GM12878 (cell line): ENCODE measurements at regions of chr16 and their contacts with region 1.

Region 1: DNA sequence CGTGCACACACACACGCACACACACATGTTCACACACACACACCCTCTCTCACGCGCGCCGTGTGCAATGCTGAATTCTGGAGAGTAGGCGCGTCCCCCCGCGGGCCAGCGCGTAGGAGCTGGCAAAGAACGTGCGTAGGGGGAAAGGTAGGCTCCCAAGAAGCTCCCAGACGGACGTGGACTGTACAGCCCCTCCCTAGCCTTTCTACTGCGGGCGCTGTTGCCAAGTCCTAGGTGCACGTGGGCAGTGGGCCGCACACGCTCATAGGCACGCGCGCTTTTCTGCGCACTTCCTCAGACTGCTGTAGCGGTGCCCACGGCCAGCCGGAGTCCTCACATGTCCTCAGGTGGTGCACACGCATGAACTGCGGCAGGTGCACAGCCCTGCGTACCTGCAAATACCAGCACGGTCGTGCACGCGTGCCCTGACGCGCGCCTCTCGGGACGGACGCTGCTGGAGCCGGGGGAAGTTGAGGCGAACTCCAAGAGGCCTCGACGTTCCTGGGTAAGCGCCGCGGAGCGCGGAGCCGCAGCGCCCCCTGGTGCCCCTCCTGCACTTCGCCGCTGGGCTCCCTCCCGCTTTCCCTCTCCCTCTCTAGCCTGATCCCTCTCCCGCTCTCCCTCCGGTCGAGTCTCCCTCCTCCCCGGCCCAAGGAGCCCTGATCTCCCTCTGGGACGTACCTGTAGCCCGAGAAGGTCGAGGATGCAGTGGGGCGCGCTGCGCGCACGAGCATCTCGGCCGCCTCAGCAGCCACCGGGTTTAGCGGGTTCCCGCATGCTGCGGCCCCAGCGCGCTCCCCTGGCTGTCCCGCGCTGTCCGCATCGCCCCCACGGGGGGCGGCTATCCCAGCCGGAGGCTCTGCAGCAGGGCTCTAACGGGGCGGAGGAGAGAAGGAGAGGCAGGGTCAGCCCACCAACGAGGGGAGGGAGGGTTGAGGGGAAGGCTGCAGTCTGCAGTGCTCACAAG is 749 bp downstream of the GRIN2A start:
- DNase-seq: no peak
- ATAC-seq: peak; percentile 83
- H3K4me3 ChIP-seq: peak overlapping the region; percentile 55; the same call in 1 of the 2 replicates
- H3K27ac ChIP-seq: no peak overlapping the region
- H3K4me1 ChIP-seq: peaks cover 3% of the 10 kb centered on the region; the same call in 1 of the 2 replicates
- H3K27me3 ChIP-seq: peaks cover 3 to 6% of the 10 kb centered on the region in 2 experiments; a peak in 3 of 4 replicates
- CTCF ChIP-seq: peak; percentile 76 to 97 (median 91)
- EP300 ChIP-seq: no peak
- POLR2A ChIP-seq: no peak
- RAD21 ChIP-seq: peak; percentile 82

Region 2: GRCh38 chr16:9139965-9140364 is 1041.5 kb before region 1 on chr16:
- CTCF ChIA-PET with region 1: interaction called, 14 read pairs
- POLR2A ChIA-PET with region 1: interaction called, 3 read pairs
- RAD21 ChIA-PET with region 1: interaction called, 7 read pairs
- SMC1A ChIA-PET with region 1: interaction called, 4 read pairs
- in situ Hi-C with region 1: loop called (anchors 10 kb)
- intact Hi-C with region 1: no loop called
- DNase-seq: no peak
- ATAC-seq: peak; percentile 89
- H3K4me3 ChIP-seq: no peak overlapping the region
- H3K27ac ChIP-seq: no peak overlapping the region
- H3K4me1 ChIP-seq: peaks cover 11% of the 10 kb centered on the region
- H3K27me3 ChIP-seq: no peaks in the 10 kb centered on the region
- CTCF ChIP-seq: no peak
- EP300 ChIP-seq: no peak
- POLR2A ChIP-seq: no peak
- RAD21 ChIP-seq: no peak

Region 3: GRCh38 chr16:9258423-9259051 is 922.9 kb before region 1 on chr16:
- CTCF ChIA-PET with region 1: interaction called, 14 read pairs
- POLR2A ChIA-PET with region 1: no interaction called
- RAD21 ChIA-PET with region 1: interaction called, 11 read pairs
- SMC1A ChIA-PET with region 1: interaction called, 7 read pairs
- in situ Hi-C with region 1: loop called (anchors 5 kb)
- intact Hi-C with region 1: loop called (anchors 1 kb)
- DNase-seq: no peak
- ATAC-seq: peak; percentile 95
- H3K4me3 ChIP-seq: no peak overlapping the region
- H3K27ac ChIP-seq: no peak overlapping the region
- H3K4me1 ChIP-seq: no peaks in the 10 kb centered on the region
- H3K27me3 ChIP-seq: no peaks in the 10 kb centered on the region; a peak in 1 of 4 replicates
- CTCF ChIP-seq: peak; percentile 69 to 76 (median 71)
- EP300 ChIP-seq: no peak
- POLR2A ChIP-seq: no peak
- RAD21 ChIP-seq: peak; percentile 57

Region 4: DNA sequence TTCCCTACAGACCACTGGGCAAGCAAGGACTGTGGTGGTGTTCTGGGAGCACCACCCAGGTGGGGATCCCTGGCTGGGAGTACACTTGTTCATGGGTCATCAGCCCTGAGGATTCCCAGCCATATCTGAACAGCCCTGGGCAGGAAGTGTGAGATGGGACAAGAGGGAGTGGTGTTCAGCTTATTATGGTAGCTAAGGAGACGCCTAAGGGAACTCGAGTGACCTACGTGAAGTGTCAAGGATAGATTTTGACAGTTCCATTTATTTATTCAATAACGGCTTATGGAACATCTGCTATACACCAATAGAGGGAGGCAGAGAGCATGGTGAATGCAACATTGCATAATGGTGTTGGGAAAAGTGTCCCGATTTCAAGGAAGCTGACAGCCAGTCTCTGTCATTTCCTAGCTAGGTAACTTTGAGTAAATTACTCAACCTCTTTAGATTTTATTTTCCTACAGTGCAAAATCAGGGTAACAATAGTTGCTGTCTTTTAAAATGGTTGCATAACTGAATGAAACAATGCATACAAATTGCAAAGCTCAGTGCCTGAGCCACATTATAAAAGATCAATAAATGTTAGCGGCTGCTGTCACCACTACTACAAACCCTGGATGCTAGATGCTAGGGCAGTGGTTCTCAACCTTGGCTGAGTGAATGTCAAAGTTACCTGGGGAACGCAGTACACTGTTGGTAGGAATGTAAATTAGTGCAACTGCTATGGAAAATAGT is 533.3 kb before region 1 on chr16:
- CTCF ChIA-PET with region 1: interaction called, 80 read pairs
- POLR2A ChIA-PET with region 1: no interaction called
- RAD21 ChIA-PET with region 1: interaction called, 32 read pairs
- SMC1A ChIA-PET with region 1: interaction called, 28 read pairs
- in situ Hi-C with region 1: loop called (anchors 5 kb)
- intact Hi-C with region 1: loop called (anchors 2 kb)
- DNase-seq: no peak
- ATAC-seq: peak; percentile 70
- H3K4me3 ChIP-seq: no peak overlapping the region
- H3K27ac ChIP-seq: no peak overlapping the region
- H3K4me1 ChIP-seq: no peaks in the 10 kb centered on the region
- H3K27me3 ChIP-seq: no peaks in the 10 kb centered on the region
- CTCF ChIP-seq: peak; percentile 69 to 75 (median 73); a peak in 5 of 6 replicates
- EP300 ChIP-seq: no peak
- POLR2A ChIP-seq: no peak
- RAD21 ChIP-seq: peak; percentile 76

Region 5: GRCh38 chr16:9913604-9914326 is 267.7 kb before region 1 on chr16:
- CTCF ChIA-PET with region 1: interaction called, 3 read pairs
- POLR2A ChIA-PET with region 1: no interaction called
- RAD21 ChIA-PET with region 1: interaction called, 3 read pairs
- SMC1A ChIA-PET with region 1: no interaction called
- in situ Hi-C with region 1: no loop called
- intact Hi-C with region 1: loop called (anchors 5 kb)
- DNase-seq: no peak
- ATAC-seq: no peak; the same call in 2 of the 3 replicates
- H3K4me3 ChIP-seq: no peak overlapping the region
- H3K27ac ChIP-seq: peak overlapping the region; percentile 63
- H3K4me1 ChIP-seq: peaks cover 17% of the 10 kb centered on the region
- H3K27me3 ChIP-seq: no peaks in the 10 kb centered on the region
- CTCF ChIP-seq: no peak
- EP300 ChIP-seq: no peak
- POLR2A ChIP-seq: no peak
- RAD21 ChIP-seq: no peak

Region 6: GRCh38 chr16:10031473-10031872 is 150.0 kb before region 1 on chr16:
- CTCF ChIA-PET with region 1: interaction called, 3 read pairs
- POLR2A ChIA-PET with region 1: no interaction called
- RAD21 ChIA-PET with region 1: interaction called, 7 read pairs
- SMC1A ChIA-PET with region 1: interaction called, 3 read pairs
- in situ Hi-C with region 1: no loop called
- intact Hi-C with region 1: loop called (anchors 5 kb)
- DNase-seq: no peak
- ATAC-seq: peak; percentile 29
- H3K4me3 ChIP-seq: no peak overlapping the region
- H3K27ac ChIP-seq: no peak overlapping the region
- H3K4me1 ChIP-seq: no peaks in the 10 kb centered on the region; the same call in 1 of the 2 replicates
- H3K27me3 ChIP-seq: no peaks in the 10 kb centered on the region
- CTCF ChIP-seq: peak; percentile 20 to 44 (median 23); a peak in 4 of 6 replicates
- EP300 ChIP-seq: no peak
- POLR2A ChIP-seq: no peak
- RAD21 ChIP-seq: 0 out of 2 replicates have a peak, but pooled peaks have one; percentile 15

Region 7: GRCh38 chr16:10250137-10250850 is 68.8 kb after region 1 on chr16:
- CTCF ChIA-PET with region 1: no interaction called
- POLR2A ChIA-PET with region 1: no interaction called
- RAD21 ChIA-PET with region 1: no interaction called
- SMC1A ChIA-PET with region 1: no interaction called
- in situ Hi-C with region 1: no loop called
- intact Hi-C with region 1: no loop called
- DNase-seq: no peak
- ATAC-seq: peak; percentile 61
- H3K4me3 ChIP-seq: no peak overlapping the region
- H3K27ac ChIP-seq: no peak overlapping the region
- H3K4me1 ChIP-seq: no peaks in the 10 kb centered on the region
- H3K27me3 ChIP-seq: no peaks in the 10 kb centered on the region
- CTCF ChIP-seq: no peak
- EP300 ChIP-seq: no peak
- POLR2A ChIP-seq: no peak
- RAD21 ChIP-seq: no peak

Region 8: GRCh38 chr16:10356870-10357842 is 175.7 kb after region 1 on chr16:
- CTCF ChIA-PET with region 1: no interaction called
- POLR2A ChIA-PET with region 1: no interaction called
- RAD21 ChIA-PET with region 1: no interaction called
- SMC1A ChIA-PET with region 1: no interaction called
- in situ Hi-C with region 1: no loop called
- intact Hi-C with region 1: no loop called
- DNase-seq: no peak
- ATAC-seq: no peak
- H3K4me3 ChIP-seq: no peak overlapping the region
- H3K27ac ChIP-seq: no peak overlapping the region
- H3K4me1 ChIP-seq: no peaks in the 10 kb centered on the region; the same call in 1 of the 2 replicates
- H3K27me3 ChIP-seq: no peaks in the 10 kb centered on the region
- CTCF ChIP-seq: no peak
- EP300 ChIP-seq: no peak
- POLR2A ChIP-seq: no peak
- RAD21 ChIP-seq: no peak

Region 9: GRCh38 chr16:10509534-10510025 is 328.1 kb after region 1 on chr16:
- CTCF ChIA-PET with region 1: interaction called, 5 read pairs
- POLR2A ChIA-PET with region 1: no interaction called
- RAD21 ChIA-PET with region 1: interaction called, 6 read pairs
- SMC1A ChIA-PET with region 1: interaction called, 13 read pairs
- in situ Hi-C with region 1: no loop called
- intact Hi-C with region 1: loop called (anchors 2 kb)
- DNase-seq: peak; percentile 70
- ATAC-seq: peak; percentile 99
- H3K4me3 ChIP-seq: no peak overlapping the region
- H3K27ac ChIP-seq: no peak overlapping the region
- H3K4me1 ChIP-seq: peaks cover 3% of the 10 kb centered on the region; the same call in 1 of the 2 replicates
- H3K27me3 ChIP-seq: no peaks in the 10 kb centered on the region
- CTCF ChIP-seq: peak; percentile 77 to 92 (median 86)
- EP300 ChIP-seq: no peak
- POLR2A ChIP-seq: no peak
- RAD21 ChIP-seq: peak; percentile 97